ENCODE measurements at regions of chr3 and their contacts with region 1.

Region 1: DNA sequence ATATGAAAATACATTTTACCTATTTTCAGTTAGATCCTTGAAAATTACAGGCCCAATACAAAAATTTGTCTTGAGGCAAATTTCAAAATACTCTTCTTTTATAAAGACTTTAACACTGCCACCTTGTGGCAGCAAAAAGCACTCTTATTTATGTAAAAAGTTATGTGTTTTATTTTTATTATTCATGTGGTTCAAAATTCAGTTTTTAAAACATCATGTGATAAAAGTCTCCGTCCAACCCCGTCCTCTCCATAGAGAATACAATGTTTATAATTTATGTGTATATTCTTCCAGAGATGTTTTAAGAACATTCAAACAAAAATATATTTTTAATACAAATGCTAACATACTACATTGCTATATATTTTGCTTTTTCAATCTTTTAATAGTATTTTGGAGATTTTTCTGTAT is 36.9 kb upstream of the TRIM59 start:
- DNase-seq: peak in 5 of 9 donors; percentile 4 to 27 (median 18)
- ATAC-seq: no peak
- H3K4me3 ChIP-seq: no peak overlapping the region
- H3K4me3 Mint-ChIP-seq: peak overlapping the region in 2 of 10 donors; percentile 65 to 76
- H3K27ac ChIP-seq: no peak overlapping the region
- H3K27ac Mint-ChIP-seq: no peak overlapping the region
- H3K4me1 ChIP-seq: no peaks in the 10 kb centered on the region
- H3K4me1 Mint-ChIP-seq: peaks cover 0 to 10% (median 5%) of the 10 kb centered on the region in 7 donors
- H3K27me3 ChIP-seq: no peaks in the 10 kb centered on the region
- H3K27me3 Mint-ChIP-seq: peaks cover 0 to 14% (median 5%) of the 10 kb centered on the region in 5 donors

Region 2: GRCh38 chr3:159260049-159260662 is 1226.3 kb before region 1 on chr3:
- CTCF ChIA-PET with region 1: no interaction called
- POLR2A ChIA-PET with region 1: no interaction called
- intact Hi-C with region 1: loop called (anchors 5 to 10 kb)
- DNase-seq: peak in 6 of 9 donors; percentile 2 to 39 (median 18)
- ATAC-seq: peak; percentile 40
- H3K4me3 ChIP-seq: no peak overlapping the region
- H3K4me3 Mint-ChIP-seq: no peak overlapping the region
- H3K27ac ChIP-seq: no peak overlapping the region
- H3K27ac Mint-ChIP-seq: no peak overlapping the region
- H3K4me1 ChIP-seq: no peaks in the 10 kb centered on the region
- H3K4me1 Mint-ChIP-seq: no peaks in the 10 kb centered on the region
- H3K27me3 ChIP-seq: no peaks in the 10 kb centered on the region
- H3K27me3 Mint-ChIP-seq: peaks cover 4 to 37% (median 5%) of the 10 kb centered on the region in 5 donors

Region 3: GRCh38 chr3:159884661-159885402 is 601.6 kb before region 1 on chr3:
- CTCF ChIA-PET with region 1: no interaction called
- POLR2A ChIA-PET with region 1: no interaction called
- intact Hi-C with region 1: loop called (anchors 1 kb)
- DNase-seq: peak in 3 of 9 donors; percentile 3 to 16 (median 9)
- ATAC-seq: peak; percentile 57
- H3K4me3 ChIP-seq: no peak overlapping the region
- H3K4me3 Mint-ChIP-seq: no peak overlapping the region
- H3K27ac ChIP-seq: no peak overlapping the region
- H3K27ac Mint-ChIP-seq: no peak overlapping the region
- H3K4me1 ChIP-seq: no peaks in the 10 kb centered on the region
- H3K4me1 Mint-ChIP-seq: no peaks in the 10 kb centered on the region
- H3K27me3 ChIP-seq: no peaks in the 10 kb centered on the region
- H3K27me3 Mint-ChIP-seq: peaks cover 0 to 24% (median 15%) of the 10 kb centered on the region in 5 donors

Region 4: GRCh38 chr3:160027541-160028195 is 458.8 kb before region 1 on chr3:
- CTCF ChIA-PET with region 1: interaction called, 3 read pairs
- POLR2A ChIA-PET with region 1: no interaction called
- intact Hi-C with region 1: loop called in 1 of 2 experiments (anchors 5 kb)
- DNase-seq: peak in 1 of 9 donors; percentile 36
- ATAC-seq: peak; percentile 22
- H3K4me3 ChIP-seq: no peak overlapping the region
- H3K4me3 Mint-ChIP-seq: peak overlapping the region in 1 of 10 donors; percentile 54
- H3K27ac ChIP-seq: no peak overlapping the region
- H3K27ac Mint-ChIP-seq: peak overlapping the region in 2 of 9 donors; percentile 28 to 88
- H3K4me1 ChIP-seq: no peaks in the 10 kb centered on the region
- H3K4me1 Mint-ChIP-seq: peaks cover 0 to 33% (median 0%) of the 10 kb centered on the region in 7 donors
- H3K27me3 ChIP-seq: no peaks in the 10 kb centered on the region
- H3K27me3 Mint-ChIP-seq: no peaks in the 10 kb centered on the region

Region 5: DNA sequence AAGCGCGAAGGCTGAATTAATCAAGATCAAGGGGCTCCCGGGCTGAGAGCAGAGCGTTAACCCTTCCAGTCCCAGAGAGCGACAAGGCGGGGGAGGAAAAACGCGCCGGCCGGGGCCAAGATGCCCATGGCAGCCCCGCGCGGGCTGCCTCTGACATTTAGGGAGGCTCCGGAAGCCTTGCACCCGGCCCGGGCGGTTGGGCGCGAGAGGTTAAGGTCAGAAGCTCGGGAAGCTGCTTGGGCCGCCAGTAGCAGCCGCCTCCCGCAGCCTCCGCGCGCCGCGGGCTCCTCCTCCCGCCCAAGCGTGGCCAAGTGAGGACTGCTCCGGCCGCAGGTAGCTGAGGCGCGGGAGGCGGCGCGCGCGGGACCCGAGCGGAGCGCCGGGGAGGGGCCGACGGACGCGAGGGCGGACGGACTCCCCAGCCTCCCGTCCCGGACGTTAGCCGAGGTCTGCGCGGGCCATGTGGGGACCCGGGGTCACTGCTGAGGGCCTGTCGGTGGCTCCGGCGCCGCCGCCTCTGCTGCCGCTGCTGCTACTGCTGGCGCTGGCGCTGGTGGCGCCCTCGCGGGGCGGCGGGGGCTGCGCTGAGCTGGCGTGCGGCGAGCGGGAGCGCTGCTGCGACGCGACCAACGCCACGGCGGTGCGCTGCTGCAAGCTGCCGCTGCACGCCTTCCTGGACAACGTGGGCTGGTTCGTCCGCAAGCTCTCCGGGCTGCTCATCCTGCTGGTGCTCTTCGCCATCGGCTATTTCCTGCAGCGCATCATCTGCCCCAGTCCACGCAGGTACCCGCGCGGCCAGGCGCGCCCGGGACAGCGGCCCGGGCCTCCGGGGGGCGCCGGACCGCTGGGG is 261.1 kb before region 1 on chr3 and contains the start of gene C3orf80:
- CTCF ChIA-PET with region 1: no interaction called
- POLR2A ChIA-PET with region 1: no interaction called
- intact Hi-C with region 1: loop called in 1 of 2 experiments (anchors 10 kb)
- DNase-seq: peak in 8 of 9 donors; percentile 7 to 64 (median 34)
- ATAC-seq: peak; percentile 81
- H3K4me3 ChIP-seq: peak within 1 kb of the TSS; percentile 46
- H3K4me3 Mint-ChIP-seq: peak within 1 kb of the TSS; percentile 79 to 92 (median 86)
- H3K27ac ChIP-seq: no peak within 1 kb of the TSS
- H3K27ac Mint-ChIP-seq: no peak within 1 kb of the TSS
- H3K4me1 ChIP-seq: peaks cover 8 to 17% of the 10 kb centered on the region in 2 donors
- H3K4me1 Mint-ChIP-seq: peaks cover 9 to 23% (median 19%) of the 10 kb centered on the region in 7 donors
- H3K27me3 ChIP-seq: peaks cover 11 to 22% of the 10 kb centered on the region in 2 donors
- H3K27me3 Mint-ChIP-seq: peaks cover 46 to 75% (median 53%) of the 10 kb centered on the region in 5 donors
- total RNA-seq, gene C3orf80: 0.19 TPM in 1 of 5 experiments, not detected in the others

Region 6: GRCh38 chr3:160312014-160312624 is 174.3 kb before region 1 on chr3:
- CTCF ChIA-PET with region 1: no interaction called
- POLR2A ChIA-PET with region 1: no interaction called
- intact Hi-C with region 1: no loop called
- DNase-seq: no peak
- ATAC-seq: no peak
- H3K4me3 ChIP-seq: no peak overlapping the region
- H3K4me3 Mint-ChIP-seq: no peak overlapping the region
- H3K27ac ChIP-seq: no peak overlapping the region
- H3K27ac Mint-ChIP-seq: no peak overlapping the region
- H3K4me1 ChIP-seq: no peaks in the 10 kb centered on the region
- H3K4me1 Mint-ChIP-seq: no peaks in the 10 kb centered on the region
- H3K27me3 ChIP-seq: no peaks in the 10 kb centered on the region
- H3K27me3 Mint-ChIP-seq: no peaks in the 10 kb centered on the region

Measured in naive thymus-derived CD4-positive, alpha-beta T cell (primary cell).